Endothelial cell of umbilical vein (primary cell): ENCODE measurements at regions of chr20 and their contacts with region 1.

Region 1: DNA sequence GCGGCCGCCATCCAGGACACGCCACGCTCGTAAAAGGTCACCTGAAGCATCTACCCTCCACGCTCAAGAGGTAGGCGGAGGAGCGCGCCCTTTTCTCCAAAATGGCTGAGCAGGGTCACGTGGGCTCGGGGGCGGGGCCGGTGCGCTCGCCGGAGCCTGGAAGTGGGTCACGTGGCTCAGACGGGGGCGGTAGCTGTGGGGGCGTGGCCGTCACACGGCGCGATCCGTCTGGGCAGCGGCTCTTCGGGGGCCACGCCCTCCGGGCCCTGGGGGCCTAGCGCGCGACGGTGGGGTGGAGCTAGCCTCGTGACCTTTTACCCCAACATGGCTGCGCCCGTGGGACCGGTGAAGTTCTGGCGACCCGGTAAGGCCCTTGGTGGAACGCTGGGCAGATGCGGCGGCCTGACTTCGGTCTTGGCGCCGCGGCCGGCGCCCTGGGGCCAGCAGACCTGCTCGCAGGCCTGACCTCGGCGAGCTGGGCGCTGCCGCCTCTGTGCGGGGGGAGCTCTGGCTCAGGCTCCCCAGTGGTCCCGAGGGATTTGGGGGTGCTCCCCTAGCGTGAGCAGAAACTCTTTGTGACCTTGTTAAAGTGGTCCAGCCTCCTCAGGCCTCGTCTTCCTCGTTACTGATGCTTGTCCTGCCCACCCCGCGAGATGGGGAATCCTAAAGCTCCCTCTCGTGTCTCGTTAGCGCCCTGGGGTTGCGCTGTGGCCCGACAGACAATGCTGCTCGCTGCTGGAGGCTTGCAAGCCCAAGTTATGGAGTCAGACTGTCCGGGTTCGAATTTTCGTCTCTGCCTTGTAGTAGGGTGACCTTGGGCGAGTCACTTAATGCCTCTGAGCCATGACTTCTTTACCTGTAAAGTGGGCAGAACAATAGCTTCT is at the start of gene DHX35:
- DNase-seq: peak; percentile 97
- H3K4me3 ChIP-seq: peak within 1 kb of the TSS; percentile 71 to 95 (median 84)
- H3K27ac ChIP-seq: peak within 1 kb of the TSS; percentile 62
- H3K4me1 ChIP-seq: peaks cover 19% of the 10 kb centered on the region
- H3K27me3 ChIP-seq: no peaks in the 10 kb centered on the region
- CTCF ChIP-seq: peak; percentile 11 to 52
- POLR2A ChIP-seq: peak; percentile 72
- total RNA-seq, gene DHX35: 9.8 and 10.0 TPM in 2 replicates

Region 2: DNA sequence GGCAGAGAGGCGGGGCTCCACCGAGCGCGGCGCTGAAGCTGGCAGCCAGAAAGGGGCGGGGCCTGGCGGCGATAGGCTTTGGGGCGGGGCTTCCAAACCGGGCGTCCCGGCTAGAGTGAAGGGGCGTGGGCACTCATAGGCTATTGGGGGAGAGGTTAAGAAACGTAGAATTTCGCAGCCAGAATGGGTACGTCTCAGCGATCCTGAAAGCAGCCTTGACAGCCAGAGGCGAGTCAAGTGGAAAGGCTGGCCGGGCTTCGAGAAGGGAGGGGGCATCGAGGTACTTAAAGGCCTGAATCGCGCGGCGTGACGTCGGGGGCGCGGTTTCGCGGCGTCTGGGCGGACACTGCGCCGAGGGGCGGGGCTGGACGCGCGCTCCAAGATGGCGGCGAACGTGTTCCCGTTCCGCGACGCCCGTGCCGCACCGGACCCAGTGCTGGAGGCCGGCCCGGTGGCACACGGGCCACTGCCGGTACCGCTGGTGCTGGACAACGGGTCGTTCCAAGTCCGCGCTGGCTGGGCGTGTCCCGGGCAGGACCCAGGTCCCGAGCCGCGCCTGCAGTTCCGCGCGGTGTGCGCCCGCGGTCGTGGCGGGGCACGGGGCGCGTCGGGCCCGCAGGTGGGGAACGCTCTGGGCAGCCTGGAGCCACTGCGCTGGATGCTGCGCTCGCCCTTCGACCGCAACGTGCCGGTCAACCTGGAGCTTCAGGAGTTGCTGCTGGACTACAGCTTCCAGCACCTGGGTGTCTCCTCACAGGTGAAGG is 214.0 kb before region 1 on chr20 and contains the start of gene ACTR5:
- CTCF ChIA-PET with region 1: no interaction called
- POLR2A ChIA-PET with region 1: no interaction called
- dilution Hi-C with region 1: no loop called
- intact Hi-C with region 1: loop called (anchors 1 kb)
- DNase-seq: peak; percentile 94
- H3K4me3 ChIP-seq: peak within 1 kb of the TSS; percentile 26 to 86 (median 77)
- H3K27ac ChIP-seq: peak within 1 kb of the TSS; percentile 46
- H3K4me1 ChIP-seq: peaks cover 6% of the 10 kb centered on the region
- H3K27me3 ChIP-seq: no peaks in the 10 kb centered on the region
- CTCF ChIP-seq: no peak
- POLR2A ChIP-seq: peak; percentile 80
- total RNA-seq, gene ACTR5: 9.7 and 11.3 TPM in 2 replicates

Region 3: DNA sequence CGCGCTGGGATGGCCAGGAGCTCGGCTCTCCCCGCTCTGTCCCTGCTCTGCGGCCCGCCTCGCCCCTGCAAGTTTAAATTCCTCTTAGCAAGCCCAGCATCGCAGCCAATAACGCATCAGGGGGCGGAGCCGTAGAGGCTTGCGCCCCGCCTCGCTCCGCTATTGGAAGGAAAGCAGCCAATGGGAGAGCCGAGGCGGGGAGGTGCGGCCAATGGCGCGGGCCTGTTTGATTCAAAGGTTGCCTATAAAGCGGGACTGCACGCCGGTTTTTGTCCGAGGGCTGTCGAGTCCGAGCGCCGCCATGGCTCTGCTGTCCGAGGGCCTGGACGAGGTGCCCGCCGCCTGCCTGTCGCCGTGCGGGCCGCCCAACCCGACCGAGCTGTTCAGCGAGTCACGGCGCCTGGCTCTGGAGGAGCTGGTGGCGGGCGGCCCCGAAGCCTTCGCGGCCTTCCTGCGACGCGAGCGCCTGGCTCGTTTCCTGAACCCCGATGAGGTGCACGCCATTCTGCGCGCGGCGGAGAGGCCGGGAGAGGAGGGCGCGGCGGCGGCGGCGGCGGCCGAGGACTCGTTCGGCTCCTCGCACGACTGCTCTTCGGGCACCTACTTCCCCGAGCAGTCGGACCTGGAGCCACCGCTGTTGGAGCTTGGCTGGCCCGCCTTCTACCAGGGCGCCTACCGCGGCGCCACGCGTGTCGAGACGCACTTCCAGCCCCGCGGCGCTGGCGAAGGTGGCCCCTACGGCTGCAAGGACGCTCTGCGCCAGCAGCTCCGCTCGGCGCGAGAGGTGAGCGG is 35.9 kb before region 1 on chr20 and contains the start of gene FAM83D:
- CTCF ChIA-PET with region 1: interaction called, 28 read pairs
- POLR2A ChIA-PET with region 1: interaction called, 4 read pairs
- dilution Hi-C with region 1: no loop called
- intact Hi-C with region 1: loop called (anchors 1 kb)
- DNase-seq: peak; percentile 100
- H3K4me3 ChIP-seq: peak within 1 kb of the TSS; percentile 60 to 98 (median 95)
- H3K27ac ChIP-seq: peak within 1 kb of the TSS; percentile 43
- H3K4me1 ChIP-seq: peaks cover 23% of the 10 kb centered on the region
- H3K27me3 ChIP-seq: no peaks in the 10 kb centered on the region
- CTCF ChIP-seq: peak in 1 of 2 donors; percentile 92
- POLR2A ChIP-seq: peak; percentile 95
- total RNA-seq, gene FAM83D: 35.5 and 46.0 TPM in 2 replicates

Region 4: GRCh38 chr20:38985603-38986170 is 23.4 kb after region 1 on chr20:
- CTCF ChIA-PET with region 1: interaction called, 10 read pairs
- POLR2A ChIA-PET with region 1: interaction called, 3 read pairs
- dilution Hi-C with region 1: no loop called
- intact Hi-C with region 1: no loop called
- DNase-seq: peak; percentile 38
- H3K4me3 ChIP-seq: peak overlapping the region in 1 of 3 experiments; percentile 8
- H3K27ac ChIP-seq: peak overlapping the region; percentile 15
- H3K4me1 ChIP-seq: peaks cover 16% of the 10 kb centered on the region
- H3K27me3 ChIP-seq: no peaks in the 10 kb centered on the region
- CTCF ChIP-seq: no peak
- POLR2A ChIP-seq: no peak